ENCODE measurements at regions of chr10 and their contacts with region 1.

Region 1: GRCh38 chr10:77873536-77874380 is 52.8 kb downstream of the DLG5 start:
- DNase-seq: peak; percentile 89
- H3K4me3 Mint-ChIP-seq: no peak overlapping the region
- H3K27ac Mint-ChIP-seq: peak overlapping the region; percentile 78
- H3K4me1 Mint-ChIP-seq: peaks cover 27% of the 10 kb centered on the region
- H3K27me3 Mint-ChIP-seq: no peaks in the 10 kb centered on the region
- CTCF ChIP-seq: no peak

Region 2: DNA sequence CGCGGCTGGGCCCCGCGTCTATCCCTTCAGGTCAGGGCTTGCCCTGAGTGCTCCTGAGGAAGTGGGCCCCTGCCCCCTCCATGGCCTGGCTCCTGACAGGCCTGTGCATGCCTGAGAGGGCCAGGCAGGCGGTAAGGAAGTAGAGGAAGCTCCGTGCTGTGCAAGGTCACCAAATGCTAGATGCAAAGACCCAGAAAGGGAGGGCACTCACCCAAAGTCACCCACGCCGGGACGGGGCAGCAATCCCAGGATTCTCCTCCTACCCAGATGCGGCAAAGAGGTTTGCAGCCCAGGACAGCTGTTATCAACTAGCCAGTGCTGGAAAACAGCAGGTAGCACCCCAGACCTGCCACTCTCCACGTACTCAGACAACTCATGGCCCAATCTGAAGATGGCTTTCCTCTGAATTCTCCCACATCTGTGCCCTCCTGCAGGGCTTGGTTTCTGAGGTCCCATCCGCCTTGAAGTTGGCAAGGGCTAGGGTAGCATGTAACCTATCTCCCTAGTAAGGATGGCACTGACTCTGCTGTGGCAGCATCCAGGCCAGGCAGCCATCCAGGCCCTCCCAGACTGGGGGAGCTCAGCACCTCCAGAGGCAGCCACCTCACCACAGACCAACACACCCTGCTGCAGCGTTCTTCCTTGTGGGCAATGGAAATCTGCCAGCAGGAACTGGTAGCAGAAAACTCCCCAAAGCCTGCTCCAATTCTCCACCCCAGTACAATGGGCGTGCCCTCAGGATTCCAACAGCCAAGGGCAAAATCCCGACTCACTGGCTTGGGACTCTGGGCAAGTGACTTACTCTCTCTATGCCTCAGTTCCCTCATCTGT is 25.1 kb after region 1 on chr10:
- CTCF ChIA-PET with region 1: interaction called, 10 read pairs
- intact Hi-C with region 1: no loop called
- DNase-seq: peak; percentile 79
- H3K4me3 Mint-ChIP-seq: peak overlapping the region; percentile 48
- H3K27ac Mint-ChIP-seq: peak overlapping the region; percentile 14
- H3K4me1 Mint-ChIP-seq: peaks cover 44% of the 10 kb centered on the region
- H3K27me3 Mint-ChIP-seq: no peaks in the 10 kb centered on the region
- CTCF ChIP-seq: no peak

Region 3: DNA sequence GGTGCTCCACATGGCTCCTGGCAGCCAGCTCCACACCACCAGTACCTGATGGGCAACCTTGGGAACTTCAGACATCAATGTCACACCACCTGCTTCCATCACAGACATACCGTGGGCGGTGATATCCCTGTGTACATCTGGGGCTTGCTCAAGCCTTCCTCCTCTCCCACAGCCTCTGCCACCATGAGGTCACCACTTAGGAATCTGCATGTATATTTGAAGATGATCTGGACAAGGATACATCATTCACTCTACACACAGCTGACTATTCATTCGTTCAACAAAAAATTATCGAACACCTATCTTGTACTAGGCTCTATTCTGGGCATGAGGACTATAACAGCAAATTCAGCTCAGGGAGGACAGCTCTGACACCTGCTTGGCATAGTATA is 45.9 kb after region 1 on chr10:
- CTCF ChIA-PET with region 1: no interaction called
- intact Hi-C with region 1: no loop called
- DNase-seq: no peak
- H3K4me3 Mint-ChIP-seq: no peak overlapping the region
- H3K27ac Mint-ChIP-seq: no peak overlapping the region
- H3K4me1 Mint-ChIP-seq: peaks cover 34% of the 10 kb centered on the region
- H3K27me3 Mint-ChIP-seq: no peaks in the 10 kb centered on the region
- CTCF ChIP-seq: no peak

Region 4: GRCh38 chr10:78255796-78256638 is 382.3 kb after region 1 on chr10:
- CTCF ChIA-PET with region 1: no interaction called
- intact Hi-C with region 1: no loop called
- DNase-seq: peak; percentile 60
- H3K4me3 Mint-ChIP-seq: no peak overlapping the region
- H3K27ac Mint-ChIP-seq: peak overlapping the region; percentile 6
- H3K4me1 Mint-ChIP-seq: peaks cover 8% of the 10 kb centered on the region
- H3K27me3 Mint-ChIP-seq: peaks cover 24% of the 10 kb centered on the region
- CTCF ChIP-seq: no peak

Measured in Calu3 (cell line).